AG04449 (cell line): ENCODE measurements at regions of chr13 and their contacts with region 1.

Region 1: GRCh38 chr13:44969551-44970484 is 19.5 kb downstream of the NUFIP1 start:
- DNase-seq: no peak
- H3K4me3 ChIP-seq: no peak overlapping the region
- CTCF ChIP-seq: peak; percentile 41

Region 2: GRCh38 chr13:44470638-44471562 is 498.9 kb before region 1 on chr13:
- CTCF ChIA-PET with region 1: interaction called, 15 read pairs
- POLR2A ChIA-PET with region 1: no interaction called
- DNase-seq: no peak
- H3K4me3 ChIP-seq: no peak overlapping the region
- CTCF ChIP-seq: no peak

Region 3: GRCh38 chr13:44917589-44918325 is 52.1 kb before region 1 on chr13:
- CTCF ChIA-PET with region 1: interaction called, 13 read pairs
- POLR2A ChIA-PET with region 1: no interaction called
- DNase-seq: peak; percentile 87
- H3K4me3 ChIP-seq: peak overlapping the region; percentile 65
- CTCF ChIP-seq: peak; percentile 26

Region 4: GRCh38 chr13:44955406-44955805 is 14.4 kb before region 1 on chr13:
- CTCF ChIA-PET with region 1: interaction called, 17 read pairs
- POLR2A ChIA-PET with region 1: no interaction called
- DNase-seq: no peak
- H3K4me3 ChIP-seq: no peak overlapping the region
- CTCF ChIP-seq: no peak

Region 5: GRCh38 chr13:44988973-44989817 is 19.4 kb after region 1 on chr13 and contains the starts of genes GPALPP1 and NUFIP1:
- CTCF ChIA-PET with region 1: interaction called, 20 read pairs
- POLR2A ChIA-PET with region 1: no interaction called
- DNase-seq: peak; percentile 70
- H3K4me3 ChIP-seq: peak within 1 kb of the TSS; percentile 96
- CTCF ChIP-seq: no peak

Region 6: GRCh38 chr13:45267215-45267614 is 297.4 kb after region 1 on chr13:
- CTCF ChIA-PET with region 1: no interaction called
- POLR2A ChIA-PET with region 1: no interaction called
- DNase-seq: no peak
- H3K4me3 ChIP-seq: no peak overlapping the region
- CTCF ChIP-seq: no peak